ENCODE measurements at regions of chr17 and their contacts with region 1.

Region 1: DNA sequence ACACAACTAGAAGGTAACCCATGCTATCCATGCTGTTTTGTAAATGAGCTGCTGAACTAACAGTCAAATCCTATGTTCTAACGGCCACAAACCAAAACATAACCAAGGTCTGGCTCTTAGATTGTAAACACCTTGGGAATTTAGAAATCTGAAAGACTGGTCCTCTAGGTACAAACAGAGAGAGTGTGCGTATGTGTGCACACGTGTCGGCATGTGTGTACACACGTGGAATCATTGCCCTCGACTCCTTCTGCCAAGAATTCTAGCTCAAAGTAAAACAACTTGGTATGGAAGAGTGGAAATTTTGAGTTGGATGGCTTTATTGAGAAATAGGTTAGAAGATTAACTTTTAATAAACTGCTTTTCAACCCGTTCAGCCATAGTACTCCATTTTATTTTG is 18.1 kb upstream of the GHDC start:
- DNase-seq: no peak
- ATAC-seq: peak in 1 of 2 donors; percentile 38
- H3K4me3 ChIP-seq: no peak overlapping the region
- H3K27ac ChIP-seq: peak overlapping the region; percentile 64
- H3K4me1 ChIP-seq: no peaks in the 10 kb centered on the region
- H3K27me3 ChIP-seq: no peaks in the 10 kb centered on the region

Region 2: GRCh38 chr17:42163113-42163512 is 49.3 kb before region 1 on chr17:
- intact Hi-C with region 1: no loop called
- DNase-seq: peak in 1 of 3 donors; percentile 46
- ATAC-seq: no peak
- H3K4me3 ChIP-seq: no peak overlapping the region
- H3K27ac ChIP-seq: no peak overlapping the region
- H3K4me1 ChIP-seq: no peaks in the 10 kb centered on the region
- H3K27me3 ChIP-seq: no peaks in the 10 kb centered on the region

Region 3: DNA sequence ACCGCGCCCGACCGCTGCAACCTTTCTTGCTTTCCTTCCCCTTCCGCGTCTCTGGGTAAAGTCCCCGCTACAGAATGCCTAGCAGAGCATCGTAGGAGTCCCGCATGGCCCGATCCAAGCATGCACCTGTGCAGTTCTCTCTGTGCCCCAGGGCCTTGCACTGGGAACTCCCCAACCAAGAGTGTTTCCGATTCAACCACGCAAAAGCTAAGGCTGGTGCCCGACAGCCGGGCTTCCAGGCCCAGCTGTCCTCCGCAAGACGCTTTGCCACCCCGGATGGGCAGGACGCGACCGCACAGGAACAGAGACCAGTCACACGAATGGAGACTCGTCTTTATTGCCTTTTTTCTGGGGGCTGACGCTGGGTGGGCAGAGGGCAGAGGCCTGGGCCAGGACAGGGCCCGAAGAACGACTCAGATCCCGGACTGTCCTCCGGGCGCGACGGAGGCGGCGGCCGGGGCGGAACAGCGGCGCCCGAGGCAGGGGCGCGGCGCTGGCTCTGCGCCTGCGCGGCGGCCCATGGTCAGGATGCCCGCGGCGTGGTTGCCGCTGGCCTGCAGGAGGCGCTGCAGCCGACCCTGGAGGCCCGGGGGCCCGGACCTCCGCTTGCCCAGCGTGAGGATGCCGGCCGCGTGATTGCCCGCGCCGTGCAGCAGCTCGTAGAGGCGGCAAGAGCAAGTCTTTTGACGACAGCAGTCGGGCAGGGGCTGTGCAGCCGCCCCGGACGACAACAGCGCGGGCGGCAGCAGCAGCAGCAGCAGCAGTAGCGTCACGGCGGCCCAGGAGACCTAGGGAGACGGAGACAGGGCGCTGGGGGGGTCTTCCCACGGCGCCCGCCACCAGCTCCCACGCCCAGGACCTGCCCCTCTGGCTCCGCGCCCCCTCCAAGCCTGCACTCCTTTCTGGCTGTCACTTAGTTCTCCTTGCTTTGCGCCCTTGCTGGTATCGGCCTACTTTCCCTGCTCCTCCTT is 28.4 kb before region 1 on chr17:
- intact Hi-C with region 1: loop called in 1 of 4 experiments (anchors 2 kb)
- DNase-seq: peak; percentile 79 to 93 (median 93)
- ATAC-seq: peak; percentile 81 to 85
- H3K4me3 ChIP-seq: peak overlapping the region; percentile 50
- H3K27ac ChIP-seq: peak overlapping the region; percentile 61
- H3K4me1 ChIP-seq: no peaks in the 10 kb centered on the region
- H3K27me3 ChIP-seq: no peaks in the 10 kb centered on the region

Region 4: DNA sequence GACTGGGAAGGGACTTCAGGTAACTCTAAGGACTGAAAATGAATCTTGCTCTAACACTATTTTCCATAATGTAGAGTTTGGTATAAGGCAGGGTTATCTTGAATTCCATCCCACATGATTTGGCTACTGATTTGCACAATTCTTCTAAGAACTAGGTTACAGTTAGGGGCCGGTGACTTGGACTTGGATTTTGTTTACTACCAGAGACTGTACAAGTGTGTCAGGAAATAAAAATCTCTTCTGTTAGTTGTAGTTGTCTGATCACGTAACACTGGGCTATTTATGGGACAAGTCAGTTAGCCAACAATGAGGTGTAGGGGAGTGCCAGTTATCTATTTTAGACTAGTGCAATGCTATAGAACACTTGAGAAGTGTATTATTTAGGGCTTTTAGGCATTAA is 21.6 kb after region 1 on chr17:
- intact Hi-C with region 1: no loop called
- DNase-seq: no peak
- ATAC-seq: peak; percentile 54 to 69
- H3K4me3 ChIP-seq: no peak overlapping the region
- H3K27ac ChIP-seq: no peak overlapping the region
- H3K4me1 ChIP-seq: no peaks in the 10 kb centered on the region
- H3K27me3 ChIP-seq: no peaks in the 10 kb centered on the region

Region 5: GRCh38 chr17:42322382-42323267 is 110.2 kb after region 1 on chr17:
- intact Hi-C with region 1: no loop called
- DNase-seq: peak; percentile 91 to 97 (median 94)
- ATAC-seq: peak; percentile 68 to 81
- H3K4me3 ChIP-seq: no peak overlapping the region
- H3K27ac ChIP-seq: peak overlapping the region; percentile 14
- H3K4me1 ChIP-seq: no peaks in the 10 kb centered on the region
- H3K27me3 ChIP-seq: no peaks in the 10 kb centered on the region

Region 6: DNA sequence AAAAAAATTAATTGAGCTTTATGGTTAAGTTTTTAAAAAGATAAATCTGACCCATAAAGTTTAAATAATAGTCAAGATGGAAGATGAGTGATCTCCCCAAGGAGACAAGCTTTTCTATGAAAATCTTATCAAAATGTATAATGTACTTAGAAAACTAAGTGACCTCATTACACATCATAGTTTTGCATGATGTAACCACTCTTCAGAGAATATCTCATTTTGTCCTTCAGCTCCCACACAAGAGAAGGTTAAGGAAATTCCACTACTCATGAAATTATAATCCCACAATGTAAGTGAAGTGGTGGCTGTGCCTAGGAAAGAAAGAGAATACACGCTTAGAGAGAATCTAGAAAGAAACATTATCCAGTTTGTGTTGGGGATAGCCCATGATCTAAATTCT is 161.5 kb after region 1 on chr17:
- intact Hi-C with region 1: no loop called
- DNase-seq: no peak
- ATAC-seq: no peak
- H3K4me3 ChIP-seq: no peak overlapping the region
- H3K27ac ChIP-seq: no peak overlapping the region
- H3K4me1 ChIP-seq: peaks cover 3% of the 10 kb centered on the region
- H3K27me3 ChIP-seq: no peaks in the 10 kb centered on the region